ENCODE measurements at regions of chr3 and their contacts with region 1.

Region 1: DNA sequence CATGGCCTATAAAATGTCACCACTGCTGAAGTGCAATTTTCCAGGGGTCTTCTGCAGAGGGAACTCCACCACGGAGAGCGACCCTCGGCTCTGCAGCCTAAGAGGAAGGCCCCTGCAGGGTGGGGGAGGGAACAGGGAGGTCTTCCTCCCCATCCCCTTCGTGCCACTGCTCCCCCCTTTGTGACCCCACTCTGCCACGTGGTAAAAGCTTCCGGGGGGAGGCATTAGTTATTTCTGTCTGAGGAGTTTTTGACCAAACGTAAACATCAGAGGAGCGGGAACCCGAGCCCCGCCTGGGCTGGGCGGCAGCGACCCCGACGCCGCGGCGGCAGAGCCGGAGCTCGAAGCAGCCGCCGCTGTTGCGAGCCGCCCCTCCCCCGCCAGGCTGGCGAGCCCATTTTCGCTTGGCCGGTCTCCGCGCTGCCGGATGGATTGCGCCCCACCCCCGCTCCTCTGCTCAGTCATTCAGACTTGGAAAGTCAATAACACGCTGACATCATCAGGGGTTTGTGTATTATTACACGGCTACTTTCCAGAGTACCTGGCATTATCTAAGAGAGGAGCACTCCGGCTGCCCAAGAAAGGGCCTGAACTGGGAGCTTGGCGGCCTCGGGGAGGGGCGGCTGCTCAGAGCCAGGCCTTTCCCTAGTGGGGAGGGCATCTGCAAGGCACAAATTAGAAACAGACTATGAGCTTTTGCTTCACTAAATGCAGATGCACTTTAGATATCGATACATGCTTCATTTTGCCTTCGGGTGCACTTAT is 162.5 kb upstream of the TBL1XR1 start:
- DNase-seq: peak; percentile 97
- ATAC-seq: peak; percentile 73 to 88 (median 74)
- H3K4me3 ChIP-seq: peak overlapping the region; percentile 60
- H3K4me3 Mint-ChIP-seq: peak overlapping the region; percentile 95
- H3K27ac ChIP-seq: peak overlapping the region; percentile 92
- H3K27ac Mint-ChIP-seq: peak overlapping the region; percentile 96 to 98
- H3K4me1 ChIP-seq: peaks cover 43% of the 10 kb centered on the region
- H3K4me1 Mint-ChIP-seq: peaks cover 43 to 63% of the 10 kb centered on the region in 2 donors
- H3K27me3 ChIP-seq: no peaks in the 10 kb centered on the region
- H3K27me3 Mint-ChIP-seq: no peaks in the 10 kb centered on the region
- CTCF ChIP-seq: no peak

Region 2: GRCh38 chr3:177050501-177051237 is 309.1 kb before region 1 on chr3:
- intact Hi-C with region 1: loop called (anchors 2 kb)
- DNase-seq: peak in 1 of 2 donors; percentile 78
- ATAC-seq: peak; percentile 71 to 88 (median 82)
- H3K4me3 ChIP-seq: no peak overlapping the region
- H3K4me3 Mint-ChIP-seq: no peak overlapping the region
- H3K27ac ChIP-seq: no peak overlapping the region
- H3K27ac Mint-ChIP-seq: no peak overlapping the region
- H3K4me1 ChIP-seq: no peaks in the 10 kb centered on the region
- H3K4me1 Mint-ChIP-seq: peaks cover 0 to 8% of the 10 kb centered on the region in 2 donors
- H3K27me3 ChIP-seq: no peaks in the 10 kb centered on the region
- H3K27me3 Mint-ChIP-seq: no peaks in the 10 kb centered on the region
- CTCF ChIP-seq: peak; percentile 87

Region 3: GRCh38 chr3:177144923-177145780 is 214.6 kb before region 1 on chr3:
- intact Hi-C with region 1: loop called (anchors 5 kb)
- DNase-seq: peak in 1 of 2 donors; percentile 80
- ATAC-seq: peak; percentile 87 to 88 (median 88)
- H3K4me3 ChIP-seq: no peak overlapping the region
- H3K4me3 Mint-ChIP-seq: peak overlapping the region; percentile 71
- H3K27ac ChIP-seq: peak overlapping the region; percentile 68
- H3K27ac Mint-ChIP-seq: peak overlapping the region; percentile 87 to 90
- H3K4me1 ChIP-seq: peaks cover 16% of the 10 kb centered on the region
- H3K4me1 Mint-ChIP-seq: peaks cover 56 to 59% of the 10 kb centered on the region in 2 donors
- H3K27me3 ChIP-seq: no peaks in the 10 kb centered on the region
- H3K27me3 Mint-ChIP-seq: no peaks in the 10 kb centered on the region
- CTCF ChIP-seq: no peak

Region 4: DNA sequence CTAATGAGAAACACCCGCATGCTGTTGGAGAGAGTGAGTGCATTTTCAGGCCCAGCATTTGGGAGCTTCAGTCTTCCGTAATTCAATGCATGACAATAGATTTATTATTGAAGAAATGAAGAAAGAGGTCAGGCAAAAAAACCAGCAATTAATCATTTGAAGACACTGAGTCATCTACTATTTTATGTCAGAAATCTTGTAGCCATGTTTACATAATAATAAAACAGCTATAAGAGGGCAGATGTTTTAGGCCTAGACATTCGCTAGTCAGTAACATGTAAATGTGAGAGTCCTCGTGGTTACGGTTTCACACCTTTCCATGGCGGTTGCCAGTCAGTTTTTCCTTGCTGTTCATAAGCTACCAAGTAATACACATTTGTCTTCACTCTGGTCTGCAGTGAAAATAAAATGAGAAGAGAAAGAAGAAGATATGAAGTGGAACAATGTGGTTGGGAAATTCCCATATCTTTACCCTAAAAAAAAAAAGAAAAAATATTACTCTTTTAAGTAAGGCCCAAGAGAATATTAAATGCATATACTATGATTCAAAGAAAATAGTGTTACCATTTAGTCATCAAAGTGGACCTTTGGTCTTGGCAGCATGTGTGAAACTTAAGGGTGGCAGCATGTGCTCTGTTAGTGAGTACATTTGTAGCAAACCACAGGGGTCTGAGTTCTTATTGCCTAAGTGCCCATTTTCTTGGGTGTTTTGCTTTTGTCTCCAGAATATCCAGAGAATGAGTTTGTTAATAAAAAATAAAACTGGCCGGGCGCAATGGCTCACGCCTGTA is 22.0 kb before region 1 on chr3:
- intact Hi-C with region 1: loop called (anchors 1 kb)
- DNase-seq: peak; percentile 66 to 78
- ATAC-seq: peak; percentile 70 to 83 (median 72)
- H3K4me3 ChIP-seq: no peak overlapping the region
- H3K4me3 Mint-ChIP-seq: peak overlapping the region; percentile 57
- H3K27ac ChIP-seq: peak overlapping the region; percentile 37
- H3K27ac Mint-ChIP-seq: peak overlapping the region; percentile 74 to 81
- H3K4me1 ChIP-seq: peaks cover 29% of the 10 kb centered on the region
- H3K4me1 Mint-ChIP-seq: peaks cover 45 to 46% of the 10 kb centered on the region in 2 donors
- H3K27me3 ChIP-seq: no peaks in the 10 kb centered on the region
- H3K27me3 Mint-ChIP-seq: peaks cover 2 to 7% of the 10 kb centered on the region in 2 donors
- CTCF ChIP-seq: no peak

Region 5: DNA sequence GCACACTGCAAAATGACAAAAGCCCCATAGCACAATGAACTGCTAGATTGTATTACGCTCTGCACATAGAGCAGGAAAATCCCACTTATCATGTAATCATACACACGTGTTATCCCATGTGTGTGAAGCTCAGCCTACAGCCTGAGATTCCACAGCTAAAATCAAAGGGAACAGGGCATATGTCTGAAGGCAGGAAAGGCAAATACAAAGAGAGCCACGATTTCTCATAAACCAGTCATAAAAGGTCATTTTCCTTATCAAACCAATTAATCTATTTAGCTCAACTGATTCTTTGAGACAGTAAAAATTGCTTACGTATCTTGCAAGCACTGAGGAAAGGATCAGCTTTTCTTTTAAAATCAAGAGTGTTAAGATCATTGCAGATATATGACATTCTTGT is 36.9 kb after region 1 on chr3:
- intact Hi-C with region 1: no loop called
- DNase-seq: no peak
- ATAC-seq: no peak
- H3K4me3 ChIP-seq: no peak overlapping the region
- H3K4me3 Mint-ChIP-seq: no peak overlapping the region
- H3K27ac ChIP-seq: no peak overlapping the region
- H3K27ac Mint-ChIP-seq: no peak overlapping the region
- H3K4me1 ChIP-seq: no peaks in the 10 kb centered on the region
- H3K4me1 Mint-ChIP-seq: no peaks in the 10 kb centered on the region
- H3K27me3 ChIP-seq: no peaks in the 10 kb centered on the region
- H3K27me3 Mint-ChIP-seq: no peaks in the 10 kb centered on the region
- CTCF ChIP-seq: no peak

Region 6: GRCh38 chr3:177538750-177539730 is 179.3 kb after region 1 on chr3:
- intact Hi-C with region 1: loop called (anchors 5 kb)
- DNase-seq: peak in 1 of 2 donors; percentile 62
- ATAC-seq: peak; percentile 57 to 90 (median 74)
- H3K4me3 ChIP-seq: no peak overlapping the region
- H3K4me3 Mint-ChIP-seq: peak overlapping the region; percentile 91
- H3K27ac ChIP-seq: peak overlapping the region; percentile 63
- H3K27ac Mint-ChIP-seq: peak overlapping the region; percentile 90 to 92
- H3K4me1 ChIP-seq: peaks cover 19% of the 10 kb centered on the region
- H3K4me1 Mint-ChIP-seq: peaks cover 31 to 47% of the 10 kb centered on the region in 2 donors
- H3K27me3 ChIP-seq: no peaks in the 10 kb centered on the region
- H3K27me3 Mint-ChIP-seq: no peaks in the 10 kb centered on the region
- CTCF ChIP-seq: no peak

Region 7: DNA sequence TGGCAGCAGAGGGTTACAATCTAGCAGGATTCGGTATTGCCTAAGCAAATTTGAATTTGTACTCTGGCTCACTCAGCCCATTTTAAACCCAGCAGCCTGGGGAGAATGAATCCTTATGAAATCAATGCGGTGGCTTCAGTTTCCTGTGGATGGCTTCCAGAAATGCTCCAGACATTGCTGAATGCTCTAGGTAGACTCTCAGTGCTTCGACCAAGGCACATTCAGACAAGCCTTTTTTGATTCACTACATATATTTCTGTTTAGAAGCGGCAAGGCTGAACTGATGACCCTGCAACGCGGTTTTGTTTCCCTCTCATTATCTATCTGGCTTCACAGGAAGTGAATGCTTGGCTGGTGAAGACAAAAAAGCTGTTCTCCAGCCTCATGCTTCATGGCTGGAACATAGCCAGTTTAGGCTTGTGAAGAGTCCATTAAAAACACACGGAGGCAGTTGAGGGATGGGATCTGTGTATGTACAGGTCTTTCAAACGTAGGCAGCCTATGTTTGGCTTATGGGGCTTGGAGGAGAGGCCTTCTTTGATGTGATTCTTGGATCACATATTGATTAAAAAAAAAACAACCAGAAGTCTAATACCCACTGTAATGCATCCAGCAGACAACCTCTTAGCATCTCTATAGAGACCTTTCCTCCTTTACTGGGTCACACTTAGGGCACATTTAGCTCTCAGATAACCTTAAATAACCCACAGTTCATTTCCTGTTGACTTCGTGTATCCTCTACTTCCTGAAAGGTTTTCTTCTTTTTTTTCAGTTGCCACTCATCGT is 237.7 kb after region 1 on chr3:
- intact Hi-C with region 1: loop called (anchors 1 kb)
- DNase-seq: peak; percentile 22 to 73
- ATAC-seq: peak; percentile 83 to 86 (median 84)
- H3K4me3 ChIP-seq: no peak overlapping the region
- H3K4me3 Mint-ChIP-seq: peak overlapping the region; percentile 72
- H3K27ac ChIP-seq: peak overlapping the region; percentile 52
- H3K27ac Mint-ChIP-seq: peak overlapping the region; percentile 89 to 94
- H3K4me1 ChIP-seq: peaks cover 24% of the 10 kb centered on the region
- H3K4me1 Mint-ChIP-seq: peaks cover 64 to 67% of the 10 kb centered on the region in 2 donors
- H3K27me3 ChIP-seq: no peaks in the 10 kb centered on the region
- H3K27me3 Mint-ChIP-seq: no peaks in the 10 kb centered on the region
- CTCF ChIP-seq: no peak

Region 8: GRCh38 chr3:177679568-177680441 is 320.0 kb after region 1 on chr3:
- intact Hi-C with region 1: loop called (anchors 1 kb)
- DNase-seq: peak in 1 of 2 donors; percentile 35
- ATAC-seq: peak; percentile 57 to 80 (median 65)
- H3K4me3 ChIP-seq: no peak overlapping the region
- H3K4me3 Mint-ChIP-seq: peak overlapping the region; percentile 25
- H3K27ac ChIP-seq: peak overlapping the region; percentile 57
- H3K27ac Mint-ChIP-seq: peak overlapping the region; percentile 82 to 84
- H3K4me1 ChIP-seq: peaks cover 23% of the 10 kb centered on the region
- H3K4me1 Mint-ChIP-seq: peaks cover 55 to 59% of the 10 kb centered on the region in 2 donors
- H3K27me3 ChIP-seq: no peaks in the 10 kb centered on the region
- H3K27me3 Mint-ChIP-seq: no peaks in the 10 kb centered on the region
- CTCF ChIP-seq: no peak